ENCODE measurements at regions of chr3 and their contacts with region 1.

Region 1: DNA sequence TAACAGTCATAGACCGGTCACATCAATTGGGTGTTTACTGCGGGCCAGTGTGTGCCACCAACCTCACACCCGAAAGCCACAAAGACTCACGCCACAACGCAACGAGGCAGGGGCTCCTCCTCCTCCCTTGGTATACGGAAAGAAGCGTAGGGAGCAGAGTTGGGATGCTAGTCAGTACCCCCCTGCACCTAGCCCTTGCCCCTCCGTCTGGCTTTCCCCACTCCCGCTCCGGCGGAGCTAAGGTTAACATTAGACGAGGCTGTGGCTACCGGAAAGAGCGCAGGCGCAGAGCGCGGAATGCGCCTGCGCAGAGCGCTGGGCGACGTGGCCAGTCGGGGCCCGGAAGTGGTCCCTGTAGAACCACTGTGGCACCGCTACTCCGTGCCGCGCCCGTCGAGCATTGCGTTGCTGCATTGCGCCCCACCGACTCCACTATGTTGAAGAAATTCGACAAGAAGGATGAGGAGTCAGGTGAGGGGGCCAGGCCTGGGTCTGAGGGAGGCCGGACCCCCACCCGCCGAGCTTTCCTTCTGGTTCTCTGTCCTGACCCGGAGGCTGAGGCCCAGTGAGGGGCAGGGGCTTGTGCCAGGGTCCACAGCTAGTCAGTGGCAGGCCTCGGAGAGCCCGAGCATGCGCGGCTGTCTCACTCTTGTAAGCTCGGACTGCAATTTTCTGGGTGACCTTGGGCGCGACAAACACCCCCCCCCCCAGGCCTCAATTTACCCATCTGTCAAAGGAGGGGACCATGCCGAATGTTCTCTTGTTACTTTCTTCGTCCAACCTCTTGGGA is at the start of gene COPG1:
- DNase-seq: peak; percentile 67
- H3K4me3 ChIP-seq: peak within 1 kb of the TSS; percentile 90
- CTCF ChIP-seq: no peak

Region 2: GRCh38 chr3:129016356-129016719 is 233.1 kb before region 1 on chr3:
- in situ Hi-C with region 1: loop called (anchors 10 kb)
- DNase-seq: no peak
- H3K4me3 ChIP-seq: no peak overlapping the region
- CTCF ChIP-seq: no peak